Activated CD8-positive, alpha-beta memory T cell treated with anti-CD3 and anti-CD28 coated beads, Interleukin-2, amount 10 ng/mL, durations not matched to agents 7 days and 5 days (primary cell): ENCODE measurements at regions of chr16 and their contacts with region 1.

Region 1: DNA sequence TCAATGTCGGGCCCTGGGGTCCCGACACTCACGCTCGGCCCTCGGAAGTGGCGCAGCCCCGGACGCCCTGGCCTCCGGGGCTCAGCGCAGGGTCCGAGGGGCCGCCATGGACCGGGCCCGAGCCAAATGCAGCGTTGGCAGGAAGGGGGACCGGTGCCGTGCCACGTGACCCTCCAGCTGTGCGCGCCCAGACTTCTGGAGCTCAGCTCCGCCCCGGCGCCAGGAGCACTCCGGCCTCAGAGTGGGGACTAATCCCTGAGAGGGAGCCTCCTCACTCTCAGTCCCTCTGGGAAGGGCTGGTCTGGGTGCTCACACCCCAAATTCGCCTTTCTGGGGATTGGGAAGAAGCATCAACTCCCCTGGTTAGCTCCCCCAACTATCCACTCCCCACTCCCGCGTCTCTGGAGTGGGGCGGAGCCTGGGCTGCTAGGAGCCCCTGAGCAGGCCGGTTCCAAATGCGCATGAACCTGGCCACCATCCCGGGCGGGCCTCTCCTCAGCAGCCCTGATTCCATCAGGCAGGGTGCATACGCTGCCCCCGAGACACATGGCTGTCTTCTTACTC is at the start of gene B3GNT9:
- DNase-seq: peak; percentile 67
- ATAC-seq: peak; percentile 48
- H3K4me3 Mint-ChIP-seq: peak within 1 kb of the TSS; percentile 62
- H3K27ac Mint-ChIP-seq: peak within 1 kb of the TSS; percentile 11
- H3K4me1 Mint-ChIP-seq: peaks cover 33% of the 10 kb centered on the region
- H3K27me3 Mint-ChIP-seq: no peaks in the 10 kb centered on the region
- total RNA-seq, gene B3GNT9: 5.6 to 7.9 TPM

Region 2: GRCh38 chr16:66911112-66911511 is 239.8 kb before region 1 on chr16:
- CTCF ChIA-PET with region 1: no interaction called
- DNase-seq: no peak
- ATAC-seq: no peak
- H3K4me3 Mint-ChIP-seq: no peak overlapping the region
- H3K27ac Mint-ChIP-seq: no peak overlapping the region
- H3K4me1 Mint-ChIP-seq: peaks cover 2% of the 10 kb centered on the region
- H3K27me3 Mint-ChIP-seq: peaks cover 2% of the 10 kb centered on the region

Region 3: DNA sequence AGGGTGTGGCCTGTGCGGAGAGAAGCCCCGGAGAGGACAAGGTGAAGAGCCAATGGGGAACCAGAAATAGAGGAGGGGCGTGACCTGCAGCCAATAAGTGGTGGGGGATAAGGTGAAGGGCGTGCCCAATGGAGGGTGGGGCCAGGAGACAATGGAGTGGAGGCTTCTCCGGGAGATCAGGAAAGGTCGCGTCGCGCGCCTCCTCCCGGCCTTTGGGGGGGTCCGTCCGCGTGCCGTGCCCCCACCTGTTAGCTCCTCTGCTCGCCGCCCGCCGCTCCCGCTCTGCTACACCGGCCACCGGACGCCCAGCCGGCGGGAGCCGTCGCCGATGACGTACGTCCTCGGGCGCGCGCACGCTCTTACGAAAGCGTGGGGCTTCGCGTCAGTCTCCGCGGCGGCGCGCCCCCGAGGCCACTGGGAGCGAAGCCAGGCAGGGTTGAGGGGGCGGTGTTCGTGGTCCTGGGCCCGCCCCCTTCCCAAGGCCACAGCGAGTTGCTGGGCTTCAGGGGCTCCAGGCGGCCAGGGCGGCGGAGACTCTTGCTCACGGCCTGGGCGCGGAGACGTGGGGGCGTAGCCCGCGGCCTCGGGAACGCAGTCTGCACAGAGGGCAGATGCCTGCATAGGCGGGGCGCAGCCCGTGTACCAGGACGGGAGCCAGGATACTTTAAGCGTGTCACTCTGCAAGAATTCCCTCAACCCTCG is 32.9 kb after region 1 on chr16 and contains the start of gene MATCAP1:
- CTCF ChIA-PET with region 1: interaction called, 12 read pairs
- DNase-seq: peak; percentile 98
- ATAC-seq: peak; percentile 96
- H3K4me3 Mint-ChIP-seq: peak within 1 kb of the TSS; percentile 31
- H3K27ac Mint-ChIP-seq: no peak within 1 kb of the TSS
- H3K4me1 Mint-ChIP-seq: peaks cover 17% of the 10 kb centered on the region
- H3K27me3 Mint-ChIP-seq: peaks cover 18% of the 10 kb centered on the region
- total RNA-seq, gene MATCAP1: 38.6 to 56.0 TPM

Region 4: GRCh38 chr16:67555795-67556212 is 404.9 kb after region 1 on chr16:
- CTCF ChIA-PET with region 1: no interaction called
- DNase-seq: no peak
- ATAC-seq: peak; percentile 94
- H3K4me3 Mint-ChIP-seq: peak overlapping the region; percentile 33
- H3K27ac Mint-ChIP-seq: peak overlapping the region; percentile 98
- H3K4me1 Mint-ChIP-seq: peaks cover 53% of the 10 kb centered on the region
- H3K27me3 Mint-ChIP-seq: no peaks in the 10 kb centered on the region